ENCODE measurements at regions of chr9 and their contacts with region 1.

Region 1: GRCh38 chr9:131762356-131762932 is 22.6 kb upstream of the RAPGEF1 start:
- DNase-seq: peak; percentile 94
- H3K4me3 Mint-ChIP-seq: no peak overlapping the region
- H3K27ac Mint-ChIP-seq: no peak overlapping the region
- H3K4me1 Mint-ChIP-seq: peaks cover 2% of the 10 kb centered on the region
- H3K27me3 Mint-ChIP-seq: peaks cover 28% of the 10 kb centered on the region

Region 2: DNA sequence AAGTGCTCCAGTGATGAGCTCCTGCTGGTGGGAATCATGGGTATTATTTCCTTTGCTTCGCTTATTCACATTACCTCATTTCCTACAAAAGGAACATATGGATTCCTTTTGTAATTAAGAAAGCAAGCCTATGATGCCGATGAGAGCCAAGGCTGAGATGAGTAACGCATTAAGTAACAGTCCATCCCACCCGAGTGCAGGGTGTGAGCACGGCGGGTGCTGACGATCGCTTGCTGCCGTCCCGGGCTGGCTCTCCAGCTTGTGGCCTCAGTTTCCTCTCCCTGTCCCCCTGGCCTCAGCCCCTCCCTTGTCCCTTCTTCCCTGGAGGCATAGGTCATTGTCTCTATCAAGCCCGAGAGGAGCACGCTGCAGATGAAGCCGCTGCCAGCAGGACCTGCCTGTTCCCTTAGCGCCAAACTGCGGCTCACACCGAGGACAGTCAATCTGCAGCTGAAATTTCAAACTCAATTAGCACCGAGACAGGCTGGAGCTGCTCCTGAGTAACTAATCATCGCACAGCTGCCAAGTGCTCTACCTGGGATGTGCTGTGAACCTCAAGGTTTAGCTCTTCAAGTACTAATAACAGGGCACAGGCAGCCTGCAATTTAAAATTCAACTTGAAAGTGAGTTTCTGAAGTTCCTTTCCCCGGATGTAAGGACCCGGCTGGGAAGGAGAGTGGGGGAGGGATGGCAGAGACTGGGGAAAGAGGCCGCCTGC is 92.6 kb after region 1 on chr9:
- intact Hi-C with region 1: no loop called
- DNase-seq: no peak
- H3K4me3 Mint-ChIP-seq: no peak overlapping the region
- H3K27ac Mint-ChIP-seq: no peak overlapping the region
- H3K4me1 Mint-ChIP-seq: no peaks in the 10 kb centered on the region
- H3K27me3 Mint-ChIP-seq: no peaks in the 10 kb centered on the region

Region 3: GRCh38 chr9:132169672-132170392 is 407.4 kb after region 1 on chr9:
- intact Hi-C with region 1: loop called (anchors 1 kb)
- DNase-seq: peak; percentile 88
- H3K4me3 Mint-ChIP-seq: no peak overlapping the region
- H3K27ac Mint-ChIP-seq: no peak overlapping the region
- H3K4me1 Mint-ChIP-seq: peaks cover under 1% of the 10 kb centered on the region
- H3K27me3 Mint-ChIP-seq: peaks cover 18% of the 10 kb centered on the region

Region 4: GRCh38 chr9:132249123-132249522 is 486.7 kb after region 1 on chr9:
- intact Hi-C with region 1: loop called (anchors 2 kb)
- DNase-seq: no peak
- H3K4me3 Mint-ChIP-seq: no peak overlapping the region
- H3K27ac Mint-ChIP-seq: no peak overlapping the region
- H3K4me1 Mint-ChIP-seq: no peaks in the 10 kb centered on the region
- H3K27me3 Mint-ChIP-seq: peaks cover 29% of the 10 kb centered on the region